Mammary epithelial cell (primary cell): ENCODE measurements at regions of chr3 and their contacts with region 1.

Region 1: DNA sequence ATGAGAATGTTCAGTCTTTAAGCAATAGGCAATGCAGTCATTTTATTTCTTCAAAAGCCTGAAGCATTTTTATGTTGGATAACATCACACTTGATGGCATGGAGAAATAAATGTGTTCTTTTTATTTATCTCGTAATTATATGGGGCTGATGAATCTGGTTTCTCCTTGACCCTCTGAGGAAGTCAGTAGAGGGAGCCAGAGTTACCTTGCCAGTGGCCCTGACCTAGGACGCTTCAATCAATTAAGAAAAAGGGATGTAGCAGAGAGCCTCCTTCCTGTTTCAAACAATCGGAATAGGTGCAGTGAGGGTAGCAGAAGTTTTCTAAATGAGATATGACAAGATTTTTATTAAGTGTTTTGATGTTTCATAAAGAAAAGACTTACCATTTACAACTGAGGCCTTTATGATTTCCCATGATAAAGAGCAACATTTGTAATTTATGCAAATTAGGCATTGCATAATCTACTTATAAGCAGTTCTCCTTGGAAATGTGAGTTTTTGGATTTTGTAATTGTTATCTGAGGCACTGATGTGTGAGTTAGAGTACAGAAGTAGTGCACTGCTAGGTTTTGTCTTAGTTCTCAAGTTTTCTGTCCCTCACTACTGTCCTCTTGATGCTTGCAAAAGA is 129.1 kb downstream of the RAP2B start:
- DNase-seq: peak; percentile 31
- H3K4me3 ChIP-seq: no peak overlapping the region
- H3K27ac ChIP-seq: no peak overlapping the region
- H3K4me1 ChIP-seq: peaks cover 34% of the 10 kb centered on the region
- H3K27me3 ChIP-seq: no peaks in the 10 kb centered on the region
- CTCF ChIP-seq: peak; percentile 35 to 70

Region 2: GRCh38 chr3:153150991-153151390 is 140.2 kb before region 1 on chr3:
- CTCF ChIA-PET with region 1: no interaction called
- dilution Hi-C with region 1: no loop called
- in situ Hi-C with region 1: no loop called
- intact Hi-C with region 1: no loop called
- DNase-seq: no peak
- H3K4me3 ChIP-seq: no peak overlapping the region
- H3K27ac ChIP-seq: no peak overlapping the region
- H3K4me1 ChIP-seq: no peaks in the 10 kb centered on the region
- H3K27me3 ChIP-seq: no peaks in the 10 kb centered on the region
- CTCF ChIP-seq: no peak

Region 3: GRCh38 chr3:153221748-153222162 is 69.4 kb before region 1 on chr3:
- CTCF ChIA-PET with region 1: no interaction called
- dilution Hi-C with region 1: no loop called
- in situ Hi-C with region 1: no loop called
- intact Hi-C with region 1: loop called (anchors 5 kb)
- DNase-seq: peak; percentile 99
- H3K4me3 ChIP-seq: peak overlapping the region in 1 of 3 experiments; percentile 2
- H3K27ac ChIP-seq: peak overlapping the region; percentile 78
- H3K4me1 ChIP-seq: peaks cover 24% of the 10 kb centered on the region
- H3K27me3 ChIP-seq: no peaks in the 10 kb centered on the region
- CTCF ChIP-seq: no peak

Region 4: GRCh38 chr3:153443961-153444360 is 152.8 kb after region 1 on chr3:
- CTCF ChIA-PET with region 1: interaction called, 3 read pairs
- dilution Hi-C with region 1: no loop called
- in situ Hi-C with region 1: no loop called
- intact Hi-C with region 1: loop called (anchors 1 kb)
- DNase-seq: no peak
- H3K4me3 ChIP-seq: no peak overlapping the region
- H3K27ac ChIP-seq: no peak overlapping the region
- H3K4me1 ChIP-seq: no peaks in the 10 kb centered on the region
- H3K27me3 ChIP-seq: no peaks in the 10 kb centered on the region
- CTCF ChIP-seq: peak in 1 of 2 donors; percentile 9